ENCODE measurements at regions of chr18 and their contacts with region 1.

Region 1: DNA sequence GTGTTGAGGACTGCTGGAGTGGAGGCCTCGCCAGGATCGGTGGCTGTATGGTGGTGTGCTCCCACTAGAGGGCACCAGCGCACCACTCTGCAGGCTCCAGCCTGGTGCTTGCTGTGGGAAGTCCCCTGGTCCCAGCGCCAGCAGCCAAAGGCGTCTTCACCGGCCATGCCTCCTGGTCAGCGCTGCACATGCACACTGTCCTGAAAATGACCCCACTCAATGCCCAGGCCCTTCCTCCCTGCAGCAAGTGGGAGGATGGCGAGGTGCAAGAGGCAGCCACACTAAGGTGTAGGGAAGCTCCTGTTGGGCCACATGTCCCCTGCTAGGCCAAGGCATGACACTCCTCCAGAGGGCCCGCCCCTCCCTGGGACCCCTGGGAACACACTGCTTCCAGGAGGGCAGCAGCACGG is 136.5 kb downstream of the CTIF start:
- DNase-seq: peak; percentile 68 to 71
- H3K4me3 ChIP-seq: no peak overlapping the region
- H3K27ac ChIP-seq: no peak overlapping the region
- H3K4me1 ChIP-seq: no peaks in the 10 kb centered on the region
- H3K27me3 ChIP-seq: no peaks in the 10 kb centered on the region
- CTCF ChIP-seq: peak; percentile 89

Region 2: DNA sequence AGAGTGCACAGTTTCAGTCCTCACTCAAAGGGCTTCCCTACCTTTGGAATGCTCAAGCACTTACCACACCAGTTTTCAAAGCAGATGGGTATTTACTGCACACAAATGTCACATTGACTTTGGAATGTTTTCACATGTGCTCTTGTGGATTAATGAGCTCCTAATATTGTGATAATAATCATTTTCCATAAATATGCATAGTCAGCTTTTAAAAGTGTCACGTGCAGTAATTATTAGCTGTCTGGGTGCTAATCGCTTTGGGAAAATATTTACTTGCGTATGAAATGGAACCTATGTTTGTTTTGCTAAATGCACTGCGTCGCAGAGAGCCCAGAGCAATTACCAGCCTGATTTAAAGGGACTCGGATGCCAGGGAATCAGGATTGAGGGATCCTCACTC is 974.2 kb before region 1 on chr18:
- CTCF ChIA-PET with region 1: no interaction called
- POLR2A ChIA-PET with region 1: no interaction called
- intact Hi-C with region 1: no loop called
- DNase-seq: no peak
- H3K4me3 ChIP-seq: no peak overlapping the region
- H3K27ac ChIP-seq: no peak overlapping the region
- H3K4me1 ChIP-seq: no peaks in the 10 kb centered on the region
- H3K27me3 ChIP-seq: peaks cover 56% of the 10 kb centered on the region
- CTCF ChIP-seq: no peak

Region 3: DNA sequence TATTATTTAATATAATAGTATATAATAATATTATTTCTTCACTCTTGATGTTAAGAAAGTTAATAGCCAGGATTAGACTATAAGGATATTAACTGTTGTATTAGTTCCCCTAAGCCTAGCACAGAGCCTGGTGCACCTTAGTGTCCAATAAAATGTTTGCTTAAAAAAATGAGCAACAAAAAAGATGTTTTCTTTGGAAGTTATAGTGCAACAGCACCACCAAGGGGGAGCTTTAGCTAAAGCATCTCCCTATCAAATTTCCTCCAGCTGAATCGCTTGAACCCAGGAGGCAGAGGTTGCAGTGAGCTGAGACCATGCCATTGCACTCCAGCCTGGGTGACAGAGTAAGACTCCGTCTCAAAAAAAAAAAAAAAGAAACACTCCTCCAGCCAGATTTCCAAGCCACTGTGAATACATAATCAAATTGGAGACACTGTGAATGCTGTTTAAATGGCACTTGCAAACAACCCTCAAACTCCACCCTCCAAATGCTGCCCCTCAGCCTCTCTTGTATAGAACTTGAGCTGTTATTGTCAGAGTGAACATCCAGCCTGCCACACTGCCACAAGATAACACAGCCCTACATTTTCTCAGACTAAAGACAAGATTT is 563.2 kb after region 1 on chr18:
- CTCF ChIA-PET with region 1: interaction called, 3 read pairs
- POLR2A ChIA-PET with region 1: no interaction called
- intact Hi-C with region 1: loop called (anchors 1 kb)
- DNase-seq: peak in 1 of 2 experiments; percentile 7
- H3K4me3 ChIP-seq: no peak overlapping the region
- H3K27ac ChIP-seq: no peak overlapping the region
- H3K4me1 ChIP-seq: no peaks in the 10 kb centered on the region
- H3K27me3 ChIP-seq: no peaks in the 10 kb centered on the region
- CTCF ChIP-seq: peak; percentile 77

Region 4: GRCh38 chr18:49447810-49448745 is 772.7 kb after region 1 on chr18:
- CTCF ChIA-PET with region 1: no interaction called
- POLR2A ChIA-PET with region 1: no interaction called
- intact Hi-C with region 1: loop called (anchors 1 kb)
- DNase-seq: peak; percentile 12 to 49
- H3K4me3 ChIP-seq: no peak overlapping the region
- H3K27ac ChIP-seq: no peak overlapping the region
- H3K4me1 ChIP-seq: no peaks in the 10 kb centered on the region
- H3K27me3 ChIP-seq: no peaks in the 10 kb centered on the region
- CTCF ChIP-seq: peak; percentile 79